ENCODE measurements at regions of chr9 and their contacts with region 1.

Region 1: GRCh38 chr9:94783102-94783664 is 56.7 kb downstream of the AOPEP start:
- DNase-seq: peak; percentile 75
- ATAC-seq: peak; percentile 86
- H3K4me3 ChIP-seq: no peak overlapping the region
- H3K27ac ChIP-seq: no peak overlapping the region
- H3K4me1 ChIP-seq: peaks cover 29% of the 10 kb centered on the region
- H3K27me3 ChIP-seq: no peaks in the 10 kb centered on the region
- CTCF ChIP-seq: peak; percentile 90
- EP300 ChIP-seq: no peak
- POLR2A ChIP-seq: no peak
- RAD21 ChIP-seq: peak; percentile 92

Region 2: DNA sequence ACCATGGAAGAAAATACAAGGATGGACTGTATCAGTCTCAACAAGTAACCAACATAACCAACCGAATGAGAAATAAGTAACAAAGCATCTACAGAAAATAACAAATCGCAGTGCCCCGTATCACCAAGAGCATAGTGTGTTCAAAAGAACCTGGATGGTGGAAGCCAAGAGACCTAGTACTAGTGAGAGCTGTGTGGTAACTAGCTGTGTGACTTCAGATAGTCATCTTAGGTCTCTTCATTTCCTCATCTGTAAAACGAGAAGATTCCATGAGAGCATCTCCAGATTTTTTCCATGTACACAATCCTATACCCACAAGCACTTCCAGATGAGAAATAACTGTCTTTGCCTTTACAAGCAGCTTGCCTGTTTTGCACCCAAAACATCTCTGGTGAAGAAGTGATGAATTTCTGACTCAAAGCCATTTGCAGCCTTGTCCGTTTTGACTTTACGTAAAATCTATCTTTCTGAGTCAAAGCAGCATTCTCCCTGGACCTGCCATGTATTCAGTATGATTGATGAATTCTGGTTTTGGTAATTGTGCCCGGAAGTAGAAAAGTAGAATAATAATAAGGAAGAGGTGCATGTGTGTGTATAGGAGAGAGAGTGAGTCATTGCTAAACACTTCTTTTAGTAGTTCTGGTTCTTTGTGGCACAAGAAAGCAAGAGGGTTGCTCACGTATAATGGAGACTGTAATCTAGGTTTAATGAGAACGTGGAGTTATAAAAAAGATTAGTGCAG is 15.7 kb before region 1 on chr9:
- CTCF ChIA-PET with region 1: no interaction called
- POLR2A ChIA-PET with region 1: no interaction called
- in situ Hi-C with region 1: no loop called
- intact Hi-C with region 1: no loop called
- DNase-seq: no peak
- ATAC-seq: no peak
- H3K4me3 ChIP-seq: no peak overlapping the region
- H3K27ac ChIP-seq: no peak overlapping the region
- H3K4me1 ChIP-seq: no peaks in the 10 kb centered on the region
- H3K27me3 ChIP-seq: no peaks in the 10 kb centered on the region
- CTCF ChIP-seq: no peak
- EP300 ChIP-seq: no peak
- POLR2A ChIP-seq: no peak
- RAD21 ChIP-seq: no peak

Region 3: DNA sequence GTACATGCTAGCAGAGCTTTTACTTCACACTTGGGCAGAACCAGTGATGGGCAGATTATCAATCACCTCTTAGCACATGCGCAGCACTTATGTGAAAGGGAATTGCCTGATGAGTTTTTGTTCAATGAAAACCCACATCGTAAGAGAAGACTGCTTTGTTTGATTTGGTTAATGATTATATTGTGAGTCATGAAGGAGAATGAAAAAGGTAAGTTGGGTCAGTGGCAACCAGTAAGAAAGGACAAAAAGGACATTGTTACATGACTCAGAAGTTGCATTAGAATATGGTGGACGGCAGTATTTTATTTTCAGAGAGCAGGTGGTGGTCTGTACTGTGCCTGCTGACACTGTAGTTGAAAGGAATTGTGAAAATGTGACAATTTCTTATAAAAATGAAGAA is 70.7 kb after region 1 on chr9:
- CTCF ChIA-PET with region 1: no interaction called
- POLR2A ChIA-PET with region 1: no interaction called
- in situ Hi-C with region 1: no loop called
- intact Hi-C with region 1: loop called (anchors 10 kb)
- DNase-seq: peak; percentile 94
- ATAC-seq: peak; percentile 88
- H3K4me3 ChIP-seq: no peak overlapping the region
- H3K27ac ChIP-seq: peak overlapping the region; percentile 83
- H3K4me1 ChIP-seq: peaks cover 39% of the 10 kb centered on the region
- H3K27me3 ChIP-seq: no peaks in the 10 kb centered on the region
- CTCF ChIP-seq: no peak
- EP300 ChIP-seq: peak in 1 of 2 experiments; percentile 74; a peak in 2 of 4 replicates
- POLR2A ChIP-seq: peak; percentile 33 to 46; a peak in 1 of 4 replicates
- RAD21 ChIP-seq: no peak

Region 4: DNA sequence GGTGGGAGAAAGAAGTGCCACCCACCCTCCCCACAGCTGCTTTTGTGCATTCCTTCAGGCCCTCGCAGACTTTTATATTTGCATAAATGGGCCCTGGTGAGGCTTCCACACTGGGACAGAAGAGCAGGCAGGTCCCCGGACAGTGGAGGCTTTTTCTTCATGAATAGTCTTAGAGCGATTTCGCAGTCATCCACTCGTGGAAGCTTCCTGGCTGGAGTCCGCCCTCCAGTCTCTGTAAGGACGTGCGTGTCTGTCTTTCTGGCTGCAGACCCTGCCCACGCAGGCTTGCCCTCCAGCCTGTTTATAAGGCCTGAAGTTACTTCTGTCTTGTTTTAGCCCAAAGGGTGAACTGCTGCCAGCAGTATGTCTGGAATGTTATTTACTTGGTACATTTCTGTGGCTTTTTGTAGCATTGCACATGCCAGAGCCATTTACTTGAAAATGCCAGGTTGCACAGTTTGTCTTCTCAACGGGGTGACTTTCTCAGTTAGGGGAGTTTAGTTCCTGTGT is 139.0 kb after region 1 on chr9:
- CTCF ChIA-PET with region 1: no interaction called
- POLR2A ChIA-PET with region 1: no interaction called
- in situ Hi-C with region 1: loop called (anchors 10 kb)
- intact Hi-C with region 1: no loop called
- DNase-seq: peak; percentile 91
- ATAC-seq: peak; percentile 89
- H3K4me3 ChIP-seq: peak overlapping the region in 1 of 3 experiments; percentile 45; a peak in 2 of 6 replicates
- H3K27ac ChIP-seq: peak overlapping the region; percentile 84
- H3K4me1 ChIP-seq: peaks cover 91% of the 10 kb centered on the region
- H3K27me3 ChIP-seq: no peaks in the 10 kb centered on the region
- CTCF ChIP-seq: no peak
- EP300 ChIP-seq: peak in 1 of 2 experiments; percentile 79; a peak in 3 of 4 replicates
- POLR2A ChIP-seq: peak in 1 of 2 experiments; percentile 40; a peak in 1 of 4 replicates
- RAD21 ChIP-seq: no peak

Region 5: DNA sequence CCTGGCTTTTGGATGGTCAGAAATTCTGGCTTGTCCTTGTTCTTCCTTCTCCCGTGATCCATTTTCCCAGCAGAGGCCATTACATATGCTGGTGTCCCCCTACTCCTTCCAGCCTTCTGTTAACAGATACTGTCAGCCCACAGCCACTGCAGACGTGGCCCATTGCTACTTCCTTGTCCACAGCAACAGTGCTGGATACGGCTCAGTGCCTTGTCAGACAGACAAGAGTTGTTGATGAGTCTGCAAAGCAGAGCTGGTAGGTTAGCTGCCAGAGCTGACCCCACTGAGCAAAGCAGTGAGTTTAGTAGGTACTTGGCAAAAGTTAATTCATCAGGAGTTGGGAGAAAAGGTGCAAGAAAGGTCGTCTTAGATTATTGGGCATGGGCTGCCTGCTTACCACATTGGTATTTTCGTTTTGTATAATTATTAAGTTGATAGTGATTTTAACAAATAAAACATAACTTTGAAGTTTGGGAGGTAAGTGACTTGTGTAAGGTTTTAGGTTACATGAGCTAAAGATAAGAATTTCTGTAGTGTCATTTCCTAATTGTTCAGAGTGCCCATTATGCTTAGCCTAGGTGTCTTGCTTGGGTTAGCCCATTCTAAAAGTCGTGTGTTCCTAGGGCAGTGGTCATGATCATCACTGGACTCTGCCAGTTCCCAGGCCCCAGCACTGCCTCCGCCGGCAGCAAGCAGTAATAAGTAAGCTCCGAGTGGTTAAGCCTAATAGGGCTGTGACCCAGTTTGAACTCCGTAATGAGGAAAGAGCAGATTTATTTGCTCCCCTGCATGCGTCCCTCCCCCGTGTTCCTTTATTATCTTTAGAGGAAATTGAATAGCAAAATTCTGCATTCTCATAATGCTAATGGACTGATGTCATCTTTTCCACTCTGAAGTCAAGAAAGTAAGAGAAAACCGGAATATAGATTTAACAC is 242.3 kb after region 1 on chr9:
- CTCF ChIA-PET with region 1: no interaction called
- POLR2A ChIA-PET with region 1: no interaction called
- in situ Hi-C with region 1: no loop called
- intact Hi-C with region 1: loop called (anchors 1 kb)
- DNase-seq: peak; percentile 80
- ATAC-seq: peak; percentile 46
- H3K4me3 ChIP-seq: 0 out of 6 replicates have a peak overlapping the region, but pooled peaks of 1 of the 3 experiments have one; percentile 47
- H3K27ac ChIP-seq: peak overlapping the region; percentile 94
- H3K4me1 ChIP-seq: peaks cover 100% of the 10 kb centered on the region
- H3K27me3 ChIP-seq: no peaks in the 10 kb centered on the region
- CTCF ChIP-seq: peak; percentile 44
- EP300 ChIP-seq: peak; percentile 28 to 35; a peak in 1 of 4 replicates
- POLR2A ChIP-seq: 0 out of 4 replicates have a peak, but pooled peaks of 1 of the 2 experiments have one; percentile 13
- RAD21 ChIP-seq: 0 out of 2 replicates have a peak, but pooled peaks have one; percentile 40

Region 6: GRCh38 chr9:95127249-95128176 is 344.3 kb after region 1 on chr9:
- CTCF ChIA-PET with region 1: interaction called, 3 read pairs
- POLR2A ChIA-PET with region 1: no interaction called
- in situ Hi-C with region 1: no loop called
- intact Hi-C with region 1: loop called (anchors 2 kb)
- DNase-seq: peak; percentile 53
- ATAC-seq: peak; percentile 94
- H3K4me3 ChIP-seq: no peak overlapping the region
- H3K27ac ChIP-seq: no peak overlapping the region
- H3K4me1 ChIP-seq: peaks cover 24% of the 10 kb centered on the region
- H3K27me3 ChIP-seq: no peaks in the 10 kb centered on the region
- CTCF ChIP-seq: peak; percentile 91
- EP300 ChIP-seq: no peak
- POLR2A ChIP-seq: no peak
- RAD21 ChIP-seq: peak; percentile 75